Activated CD4-positive, alpha-beta T cell treated with anti-CD3 and anti-CD28 coated beads, Interleukin-2, amount 10 ng/mL, durations not matched to agents 24 days and 14 days (primary cell): ENCODE measurements at regions of chr7 and their contacts with region 1.

Region 1: DNA sequence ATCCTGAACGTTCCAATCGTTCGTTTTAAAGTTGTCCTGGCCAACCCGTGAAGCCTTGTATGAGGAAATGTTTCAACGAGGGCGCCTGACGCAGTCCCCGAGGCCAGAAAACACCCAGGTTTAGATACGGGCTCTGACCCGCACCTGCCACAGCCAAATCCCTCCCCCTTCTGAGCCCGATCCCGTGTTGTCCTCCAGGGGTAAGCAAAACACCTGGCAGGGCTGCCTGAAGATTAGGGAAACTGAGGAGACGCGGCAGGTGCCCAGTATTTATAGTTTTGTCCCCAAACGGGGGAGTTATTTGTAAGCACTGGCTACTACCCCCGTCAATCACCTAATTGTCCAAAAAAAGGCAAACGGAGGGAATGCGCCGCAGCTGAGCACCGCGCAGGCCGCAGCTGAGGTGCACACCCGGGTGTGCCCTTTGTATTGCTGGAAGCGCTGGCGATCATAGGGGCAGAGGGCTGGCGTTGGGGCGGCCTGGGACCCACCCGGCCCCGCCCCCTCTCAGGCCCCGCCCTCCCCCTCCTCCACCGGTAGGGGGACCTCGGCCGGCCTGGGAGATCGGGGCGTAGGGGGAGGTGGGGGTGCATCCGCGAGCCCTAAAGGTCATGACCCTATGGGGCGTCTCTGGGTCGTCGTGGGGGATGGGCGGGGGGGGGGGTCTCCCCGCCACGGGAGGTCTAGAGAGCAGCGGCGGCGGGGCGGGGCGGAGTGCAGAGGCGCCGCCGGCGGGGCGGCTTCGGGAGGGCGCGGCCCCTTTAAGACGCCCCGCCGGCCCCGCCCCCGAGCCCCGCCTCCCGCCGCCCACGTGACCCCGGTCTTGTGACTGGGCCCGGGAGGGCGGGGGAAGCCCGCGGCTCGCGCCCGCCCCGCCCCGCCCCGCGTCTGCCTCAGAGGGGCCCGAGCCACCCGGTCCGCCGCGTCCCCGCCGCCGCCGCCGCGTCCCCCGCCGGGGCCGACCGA is at the start of gene BRI3:
- DNase-seq: peak; percentile 94
- H3K4me3 Mint-ChIP-seq: peak within 1 kb of the TSS; percentile 87
- H3K27ac Mint-ChIP-seq: peak within 1 kb of the TSS; percentile 83
- H3K4me1 Mint-ChIP-seq: peaks cover 19% of the 10 kb centered on the region
- H3K27me3 Mint-ChIP-seq: no peaks in the 10 kb centered on the region
- total RNA-seq, gene BRI3: 66.8 and 70.3 TPM in 2 replicates

Region 2: GRCh38 chr7:97872025-97872669 is 408.9 kb before region 1 on chr7 and contains the start of gene ASNS:
- intact Hi-C with region 1: loop called (anchors 1 kb)
- DNase-seq: peak; percentile 97
- H3K4me3 Mint-ChIP-seq: peak within 1 kb of the TSS; percentile 92
- H3K27ac Mint-ChIP-seq: peak within 1 kb of the TSS; percentile 88
- H3K4me1 Mint-ChIP-seq: peaks cover 13% of the 10 kb centered on the region
- H3K27me3 Mint-ChIP-seq: no peaks in the 10 kb centered on the region
- total RNA-seq, gene ASNS: 80.6 and 84.1 TPM in 2 replicates

Region 3: GRCh38 chr7:98202367-98203195 is 78.5 kb before region 1 on chr7:
- intact Hi-C with region 1: loop called (anchors 2 kb)
- DNase-seq: peak; percentile 91
- H3K4me3 Mint-ChIP-seq: peak overlapping the region; percentile 77
- H3K27ac Mint-ChIP-seq: peak overlapping the region; percentile 83
- H3K4me1 Mint-ChIP-seq: peaks cover 37% of the 10 kb centered on the region
- H3K27me3 Mint-ChIP-seq: no peaks in the 10 kb centered on the region

Region 4: GRCh38 chr7:98251841-98252639 is 29.0 kb before region 1 on chr7 and contains the start of gene TECPR1:
- intact Hi-C with region 1: loop called (anchors 1 kb)
- DNase-seq: peak; percentile 98
- H3K4me3 Mint-ChIP-seq: peak within 1 kb of the TSS; percentile 98
- H3K27ac Mint-ChIP-seq: peak within 1 kb of the TSS; percentile 98
- H3K4me1 Mint-ChIP-seq: peaks cover 52% of the 10 kb centered on the region
- H3K27me3 Mint-ChIP-seq: no peaks in the 10 kb centered on the region
- total RNA-seq, gene TECPR1: 43.1 and 47.8 TPM in 2 replicates

Region 5: DNA sequence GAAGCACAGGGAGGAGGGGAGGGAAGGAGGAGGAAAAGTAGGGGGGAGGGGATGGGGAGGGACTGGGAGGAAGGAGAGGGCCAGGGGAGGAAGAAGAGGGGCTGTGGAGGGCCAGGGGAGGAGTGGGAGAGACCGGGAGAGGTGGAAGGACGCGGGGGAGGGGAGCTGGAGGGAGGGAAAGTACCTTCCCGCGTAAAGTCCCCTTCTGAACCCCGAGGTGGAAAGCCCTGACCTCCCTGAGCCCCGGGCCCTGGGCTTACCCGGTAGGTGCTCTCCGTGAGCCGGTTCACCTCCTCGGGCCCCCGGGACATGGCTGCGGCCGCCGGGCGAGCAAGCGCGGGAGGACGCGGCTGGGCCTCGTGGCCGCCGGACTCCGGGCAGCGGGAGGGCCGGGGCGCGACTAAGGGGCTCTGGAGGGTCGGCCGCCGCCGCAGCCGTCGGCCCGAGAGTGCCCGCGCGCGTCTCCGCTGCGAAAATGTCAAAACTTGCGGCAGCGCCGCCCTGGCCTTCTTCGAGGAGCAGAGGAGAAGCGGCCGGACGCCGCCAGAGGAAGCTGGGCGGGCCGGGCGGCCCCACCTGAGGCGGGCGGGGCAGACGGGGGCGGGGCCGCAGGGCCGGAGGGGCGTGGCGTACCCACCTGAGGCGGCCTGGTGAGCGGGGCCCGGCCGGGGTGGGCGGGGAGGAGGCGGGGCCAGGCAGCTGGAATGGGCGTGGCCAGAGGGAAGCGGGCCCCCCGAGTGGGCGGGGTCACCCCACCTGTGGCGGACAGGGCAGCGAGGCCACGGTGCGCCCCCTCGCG is 119.7 kb after region 1 on chr7 and contains the start of gene BAIAP2L1:
- intact Hi-C with region 1: loop called (anchors 10 kb)
- DNase-seq: peak; percentile 91
- H3K4me3 Mint-ChIP-seq: peak within 1 kb of the TSS; percentile 48
- H3K27ac Mint-ChIP-seq: no peak within 1 kb of the TSS
- H3K4me1 Mint-ChIP-seq: no peaks in the 10 kb centered on the region
- H3K27me3 Mint-ChIP-seq: peaks cover 16% of the 10 kb centered on the region
- total RNA-seq, gene BAIAP2L1: 1.3 and 1.4 TPM in 2 replicates

Region 6: DNA sequence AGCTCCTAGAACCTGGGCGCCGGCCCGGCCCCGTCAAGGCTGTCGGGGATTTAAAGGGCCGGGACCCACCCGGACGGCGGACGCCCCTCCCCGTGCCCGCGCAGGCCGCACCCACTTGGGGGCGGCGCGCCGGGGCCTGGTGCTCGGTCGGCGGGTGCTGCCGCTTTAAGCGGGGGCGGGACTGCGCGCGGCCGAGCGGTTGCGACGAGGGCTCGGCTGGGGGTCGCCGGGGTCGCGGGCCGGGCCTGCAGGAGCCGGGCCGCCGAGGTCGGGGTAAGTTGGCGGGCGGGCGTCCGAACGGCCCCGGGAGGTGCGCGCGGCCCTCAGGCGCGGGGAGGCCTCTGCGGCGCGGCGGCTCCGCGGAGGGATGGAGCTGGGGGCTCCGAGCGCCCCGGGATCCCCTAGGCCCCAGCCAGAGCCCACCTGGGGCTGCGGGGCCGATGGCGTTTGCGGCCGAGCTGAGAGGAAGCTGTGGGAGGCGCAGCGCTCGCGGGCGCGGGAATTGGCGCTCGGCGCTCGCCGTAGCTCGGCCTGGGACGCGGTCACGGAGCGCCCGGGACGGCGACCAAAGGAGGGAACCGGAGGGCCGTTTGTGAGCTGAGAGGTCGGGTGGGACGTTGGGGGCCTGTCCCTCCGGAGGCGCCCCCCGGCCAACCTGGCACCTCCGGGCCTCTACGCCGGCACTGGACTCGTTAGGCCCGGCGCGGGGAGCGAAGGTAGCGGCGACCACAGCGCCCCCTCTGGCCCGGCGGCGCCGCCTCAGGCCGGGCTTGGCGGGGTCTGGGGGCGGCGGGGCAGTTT is 597.5 kb after region 1 on chr7 and contains the start of gene TRRAP:
- intact Hi-C with region 1: loop called (anchors 5 kb)
- DNase-seq: peak; percentile 92
- H3K4me3 Mint-ChIP-seq: peak within 1 kb of the TSS; percentile 93
- H3K27ac Mint-ChIP-seq: peak within 1 kb of the TSS; percentile 94
- H3K4me1 Mint-ChIP-seq: peaks cover 24% of the 10 kb centered on the region
- H3K27me3 Mint-ChIP-seq: peaks cover 6% of the 10 kb centered on the region
- total RNA-seq, gene TRRAP: 62.7 and 65.1 TPM in 2 replicates